Panc1 (cell line): ENCODE measurements at regions of chr4 and their contacts with region 1.

Region 1: DNA sequence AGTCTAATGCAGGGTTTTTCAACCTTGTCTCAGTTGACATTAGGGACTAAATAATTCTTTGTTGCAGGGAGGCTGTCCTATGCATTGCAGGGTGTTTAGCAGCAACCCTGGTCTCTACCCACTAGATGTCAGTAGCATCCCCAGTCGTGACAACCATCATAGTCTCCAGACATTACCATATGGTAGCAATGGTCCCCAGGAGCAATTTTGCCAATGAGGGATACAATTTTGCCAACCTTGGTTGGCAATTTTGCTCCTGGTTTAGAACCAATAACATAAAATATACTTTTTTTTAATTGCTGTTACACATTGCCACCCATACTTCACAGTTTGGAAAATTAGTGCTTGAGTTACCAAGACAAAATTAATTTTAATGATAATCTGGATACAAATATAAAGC is 6.0 kb downstream of the EREG start:
- DNase-seq: no peak
- ATAC-seq: peak; percentile 85
- H3K4me3 ChIP-seq: no peak overlapping the region
- H3K27ac ChIP-seq: no peak overlapping the region
- H3K4me1 ChIP-seq: no peaks in the 10 kb centered on the region; the same call in 1 of the 2 replicates
- H3K27me3 ChIP-seq: no peaks in the 10 kb centered on the region
- CTCF ChIP-seq: peak; percentile 78

Region 2: GRCh38 chr4:74531963-74532794 is 161.3 kb after region 1 on chr4:
- CTCF ChIA-PET with region 1: no interaction called
- POLR2A ChIA-PET with region 1: no interaction called
- in situ Hi-C with region 1: no loop called
- intact Hi-C with region 1: loop called (anchors 2 kb)
- DNase-seq: peak; percentile 75
- ATAC-seq: 0 out of 2 replicates have a peak, but pooled peaks have one; percentile 63
- H3K4me3 ChIP-seq: no peak overlapping the region
- H3K27ac ChIP-seq: peak overlapping the region; percentile 56; the same call in 1 of the 2 replicates
- H3K4me1 ChIP-seq: no peaks in the 10 kb centered on the region
- H3K27me3 ChIP-seq: no peaks in the 10 kb centered on the region
- CTCF ChIP-seq: peak; percentile 55

Region 3: GRCh38 chr4:74623041-74623440 is 252.1 kb after region 1 on chr4:
- CTCF ChIA-PET with region 1: interaction called, 3 read pairs
- POLR2A ChIA-PET with region 1: interaction called, 9 read pairs
- in situ Hi-C with region 1: no loop called
- intact Hi-C with region 1: loop called (anchors 2 kb)
- DNase-seq: peak; percentile 51
- ATAC-seq: peak; percentile 72
- H3K4me3 ChIP-seq: no peak overlapping the region
- H3K27ac ChIP-seq: no peak overlapping the region
- H3K4me1 ChIP-seq: no peaks in the 10 kb centered on the region
- H3K27me3 ChIP-seq: no peaks in the 10 kb centered on the region
- CTCF ChIP-seq: peak; percentile 58